B cell (primary cell): ENCODE measurements at regions of chr16 and their contacts with region 1.

Region 1: GRCh38 chr16:27235055-27235937 is 32.0 kb downstream of the KDM8 start:
- DNase-seq: peak; percentile 77
- ATAC-seq: peak; percentile 13
- H3K4me3 ChIP-seq: peak overlapping the region; percentile 8 to 48 (median 32)
- H3K4me3 Mint-ChIP-seq: peak overlapping the region; percentile 81
- H3K27ac ChIP-seq: peak overlapping the region; percentile 91 to 92
- H3K27ac Mint-ChIP-seq: peak overlapping the region; percentile 93
- H3K4me1 ChIP-seq: peaks cover 83 to 94% of the 10 kb centered on the region in 2 donors
- H3K4me1 Mint-ChIP-seq: peaks cover 85% of the 10 kb centered on the region
- H3K27me3 ChIP-seq: no peaks in the 10 kb centered on the region
- H3K27me3 Mint-ChIP-seq: no peaks in the 10 kb centered on the region
- CTCF ChIP-seq: peak; percentile 85

Region 2: GRCh38 chr16:26777821-26778220 is 457.5 kb before region 1 on chr16:
- CTCF ChIA-PET with region 1: no interaction called
- POLR2A ChIA-PET with region 1: no interaction called
- intact Hi-C with region 1: no loop called
- DNase-seq: no peak
- ATAC-seq: no peak
- H3K4me3 ChIP-seq: no peak overlapping the region
- H3K4me3 Mint-ChIP-seq: no peak overlapping the region
- H3K27ac ChIP-seq: no peak overlapping the region
- H3K27ac Mint-ChIP-seq: no peak overlapping the region
- H3K4me1 ChIP-seq: no peaks in the 10 kb centered on the region
- H3K4me1 Mint-ChIP-seq: no peaks in the 10 kb centered on the region
- H3K27me3 ChIP-seq: no peaks in the 10 kb centered on the region
- H3K27me3 Mint-ChIP-seq: peaks cover 31% of the 10 kb centered on the region
- CTCF ChIP-seq: no peak

Region 3: GRCh38 chr16:27154705-27155521 is 80.4 kb before region 1 on chr16:
- CTCF ChIA-PET with region 1: interaction called, 54 read pairs
- POLR2A ChIA-PET with region 1: no interaction called
- intact Hi-C with region 1: no loop called
- DNase-seq: peak; percentile 75
- ATAC-seq: peak; percentile 91
- H3K4me3 ChIP-seq: no peak overlapping the region
- H3K4me3 Mint-ChIP-seq: no peak overlapping the region
- H3K27ac ChIP-seq: no peak overlapping the region
- H3K27ac Mint-ChIP-seq: no peak overlapping the region
- H3K4me1 ChIP-seq: peaks cover 9 to 11% of the 10 kb centered on the region in 2 donors
- H3K4me1 Mint-ChIP-seq: peaks cover 13% of the 10 kb centered on the region
- H3K27me3 ChIP-seq: no peaks in the 10 kb centered on the region
- H3K27me3 Mint-ChIP-seq: no peaks in the 10 kb centered on the region
- CTCF ChIP-seq: peak; percentile 99

Region 4: GRCh38 chr16:27203429-27204231 is 31.7 kb before region 1 on chr16 and contains the start of gene KDM8:
- CTCF ChIA-PET with region 1: interaction called, 21 read pairs
- POLR2A ChIA-PET with region 1: interaction called, 24 read pairs
- intact Hi-C with region 1: loop called (anchors 1 kb)
- DNase-seq: peak; percentile 100
- ATAC-seq: peak; percentile 76
- H3K4me3 ChIP-seq: peak within 1 kb of the TSS; percentile 69 to 95 (median 92)
- H3K4me3 Mint-ChIP-seq: peak within 1 kb of the TSS; percentile 97
- H3K27ac ChIP-seq: peak within 1 kb of the TSS; percentile 93 to 94
- H3K27ac Mint-ChIP-seq: peak within 1 kb of the TSS; percentile 100
- H3K4me1 ChIP-seq: peaks cover 50 to 62% of the 10 kb centered on the region in 2 donors
- H3K4me1 Mint-ChIP-seq: peaks cover 67% of the 10 kb centered on the region
- H3K27me3 ChIP-seq: no peaks in the 10 kb centered on the region
- H3K27me3 Mint-ChIP-seq: no peaks in the 10 kb centered on the region
- CTCF ChIP-seq: no peak
- total RNA-seq, gene KDM8: 37.4 and 39.8 TPM in 2 replicates

Region 5: DNA sequence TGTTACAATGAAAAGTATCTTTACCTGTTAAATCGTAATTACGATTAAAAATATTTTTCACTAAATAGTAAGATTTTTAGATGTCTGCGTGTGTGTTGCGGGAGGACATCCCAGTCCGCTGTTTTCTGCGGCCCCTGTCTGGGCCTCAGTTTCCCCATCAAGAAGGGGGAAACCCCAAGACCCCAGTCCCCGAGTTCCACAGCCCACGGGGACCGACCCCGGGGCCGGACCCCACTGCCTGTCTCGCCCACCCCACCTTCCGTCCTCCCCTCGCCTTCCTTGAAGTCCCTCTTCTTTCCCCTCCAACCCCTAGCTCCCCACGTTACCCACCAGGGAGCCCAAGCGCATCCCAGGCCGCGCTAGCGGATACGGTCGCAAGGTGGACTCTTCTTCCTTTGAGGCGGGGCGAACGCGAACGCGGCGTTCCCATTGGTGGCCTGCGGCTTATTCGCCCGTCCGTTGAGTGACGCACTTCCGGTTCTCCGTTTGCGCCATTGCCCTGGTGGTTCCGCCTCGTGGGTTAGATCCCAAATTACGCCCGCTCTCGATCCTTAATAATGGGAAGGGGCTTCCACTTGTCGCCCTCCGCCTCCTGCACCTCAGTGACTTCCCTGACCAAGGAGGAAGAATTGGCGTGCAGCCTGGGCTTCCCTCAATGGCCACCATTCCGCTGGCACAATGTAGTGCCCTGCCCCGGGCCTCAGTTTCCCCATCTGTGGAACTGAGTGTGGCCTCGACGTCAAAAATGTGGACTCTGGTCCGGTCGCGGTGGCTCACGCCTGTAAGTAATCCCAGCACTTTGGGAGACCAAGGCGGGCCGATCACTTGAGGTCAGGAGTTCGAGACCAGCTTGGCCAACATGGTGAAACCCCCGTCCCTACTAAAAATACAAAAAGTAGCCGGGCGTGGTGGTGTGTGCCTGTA is 33.3 kb after region 1 on chr16 and contains the start of gene NSMCE1:
- CTCF ChIA-PET with region 1: interaction called, 33 read pairs
- POLR2A ChIA-PET with region 1: interaction called, 6 read pairs
- intact Hi-C with region 1: loop called (anchors 2 kb)
- DNase-seq: peak; percentile 97
- ATAC-seq: peak; percentile 97
- H3K4me3 ChIP-seq: peak within 1 kb of the TSS; percentile 88 to 97 (median 94)
- H3K4me3 Mint-ChIP-seq: peak within 1 kb of the TSS; percentile 99
- H3K27ac ChIP-seq: peak within 1 kb of the TSS; percentile 93 to 99
- H3K27ac Mint-ChIP-seq: peak within 1 kb of the TSS; percentile 99
- H3K4me1 ChIP-seq: peaks cover 59 to 63% of the 10 kb centered on the region in 2 donors
- H3K4me1 Mint-ChIP-seq: peaks cover 71% of the 10 kb centered on the region
- H3K27me3 ChIP-seq: no peaks in the 10 kb centered on the region
- H3K27me3 Mint-ChIP-seq: no peaks in the 10 kb centered on the region
- CTCF ChIP-seq: peak; percentile 11
- total RNA-seq, gene NSMCE1: 56.8 and 61.9 TPM in 2 replicates

Region 6: GRCh38 chr16:27313422-27314160 is 78.3 kb after region 1 on chr16 and contains the start of gene IL4R:
- CTCF ChIA-PET with region 1: interaction called, 172 read pairs
- POLR2A ChIA-PET with region 1: interaction called, 5 read pairs
- intact Hi-C with region 1: loop called (anchors 1 kb)
- DNase-seq: peak; percentile 80
- ATAC-seq: peak; percentile 61
- H3K4me3 ChIP-seq: peak within 1 kb of the TSS; percentile 83 to 98 (median 93)
- H3K4me3 Mint-ChIP-seq: peak within 1 kb of the TSS; percentile 98
- H3K27ac ChIP-seq: peak within 1 kb of the TSS; percentile 90 to 97
- H3K27ac Mint-ChIP-seq: peak within 1 kb of the TSS; percentile 97
- H3K4me1 ChIP-seq: peaks cover 40 to 53% of the 10 kb centered on the region in 2 donors
- H3K4me1 Mint-ChIP-seq: peaks cover 72% of the 10 kb centered on the region
- H3K27me3 ChIP-seq: no peaks in the 10 kb centered on the region
- H3K27me3 Mint-ChIP-seq: no peaks in the 10 kb centered on the region
- CTCF ChIP-seq: no peak
- total RNA-seq, gene IL4R: 311 and 323 TPM in 2 replicates

Region 7: GRCh38 chr16:27367461-27368357 is 132.4 kb after region 1 on chr16:
- CTCF ChIA-PET with region 1: interaction called, 121 read pairs
- POLR2A ChIA-PET with region 1: interaction called, 10 read pairs
- intact Hi-C with region 1: loop called (anchors 1 kb)
- DNase-seq: peak; percentile 95
- ATAC-seq: peak; percentile 77
- H3K4me3 ChIP-seq: peak overlapping the region; percentile 11 to 42 (median 30)
- H3K4me3 Mint-ChIP-seq: peak overlapping the region; percentile 78
- H3K27ac ChIP-seq: peak overlapping the region; percentile 97
- H3K27ac Mint-ChIP-seq: peak overlapping the region; percentile 96
- H3K4me1 ChIP-seq: peaks cover 36 to 57% of the 10 kb centered on the region in 2 donors
- H3K4me1 Mint-ChIP-seq: peaks cover 57% of the 10 kb centered on the region
- H3K27me3 ChIP-seq: no peaks in the 10 kb centered on the region
- H3K27me3 Mint-ChIP-seq: no peaks in the 10 kb centered on the region
- CTCF ChIP-seq: peak; percentile 85

Region 8: GRCh38 chr16:27455700-27456099 is 220.4 kb after region 1 on chr16:
- CTCF ChIA-PET with region 1: interaction called, 54 read pairs
- POLR2A ChIA-PET with region 1: interaction called, 3 read pairs
- intact Hi-C with region 1: loop called (anchors 1 kb)
- DNase-seq: peak; percentile 36
- ATAC-seq: no peak
- H3K4me3 ChIP-seq: no peak overlapping the region
- H3K4me3 Mint-ChIP-seq: no peak overlapping the region
- H3K27ac ChIP-seq: peak overlapping the region in 1 of 2 donors; percentile 30
- H3K27ac Mint-ChIP-seq: no peak overlapping the region
- H3K4me1 ChIP-seq: peaks cover 30 to 49% of the 10 kb centered on the region in 2 donors
- H3K4me1 Mint-ChIP-seq: peaks cover 55% of the 10 kb centered on the region
- H3K27me3 ChIP-seq: no peaks in the 10 kb centered on the region
- H3K27me3 Mint-ChIP-seq: no peaks in the 10 kb centered on the region
- CTCF ChIP-seq: no peak